CD14-positive monocyte (primary cell): ENCODE measurements at regions of chr12 and their contacts with region 1.

Region 1: GRCh38 chr12:57846577-57847319 is at the start of gene CTDSP2:
- DNase-seq: peak; percentile 94 to 96 (median 94)
- H3K4me3 ChIP-seq: peak within 1 kb of the TSS; percentile 85 to 99 (median 87)
- H3K4me3 Mint-ChIP-seq: peak within 1 kb of the TSS; percentile 86 to 93
- H3K27ac ChIP-seq: peak within 1 kb of the TSS; percentile 47 to 87
- H3K27ac Mint-ChIP-seq: peak within 1 kb of the TSS; percentile 63 to 91 (median 82)
- H3K4me1 ChIP-seq: peaks cover 45 to 62% of the 10 kb centered on the region in 2 donors
- H3K4me1 Mint-ChIP-seq: peaks cover 58% of the 10 kb centered on the region
- H3K27me3 ChIP-seq: peaks cover 9 to 11% of the 10 kb centered on the region in 2 donors
- H3K27me3 Mint-ChIP-seq: peaks cover 10 to 27% (median 16%) of the 10 kb centered on the region in 3 donors
- CTCF ChIP-seq: no peak
- polyA plus RNA-seq, gene CTDSP2: 59.1 to 148 (median 70.2) TPM

Region 2: DNA sequence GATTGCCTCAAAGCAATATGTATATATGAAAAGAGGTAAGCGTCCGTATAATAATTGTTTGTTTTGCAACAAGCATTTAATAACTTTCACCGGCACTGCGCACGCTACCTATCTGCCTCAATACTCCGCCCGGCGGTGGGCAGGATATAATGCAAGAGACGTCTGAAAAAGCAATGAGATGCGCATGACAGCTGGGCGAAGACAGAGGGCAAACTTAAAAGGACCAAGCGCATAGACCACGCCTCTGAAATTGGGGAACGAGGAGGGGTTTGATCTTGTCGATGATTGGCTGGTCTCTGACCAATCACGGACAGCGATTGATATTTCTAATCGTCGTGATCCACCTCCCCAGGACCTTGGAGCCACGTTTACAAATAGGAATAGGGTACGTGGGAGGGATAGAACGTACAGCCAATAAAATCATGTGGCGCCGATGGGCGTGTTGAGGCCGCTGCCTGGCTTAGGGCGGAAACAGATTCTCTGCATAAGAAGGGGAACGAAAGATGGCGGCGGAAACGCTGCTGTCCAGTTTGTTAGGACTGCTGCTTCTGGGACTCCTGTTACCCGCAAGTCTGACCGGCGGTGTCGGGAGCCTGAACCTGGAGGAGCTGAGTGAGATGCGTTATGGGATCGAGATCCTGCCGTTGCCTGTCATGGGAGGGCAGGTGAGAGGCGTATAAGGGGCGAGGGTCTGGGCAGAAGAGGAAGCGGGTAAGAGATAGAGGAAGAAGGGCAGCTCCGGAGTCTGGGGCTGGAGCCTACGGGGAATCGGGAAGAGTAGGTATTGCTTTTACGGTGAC is 152.9 kb before region 1 on chr12 and contains the start of gene OS9:
- intact Hi-C with region 1: loop called in 1 of 2 experiments (anchors 5 kb)
- DNase-seq: peak; percentile 99 to 100 (median 100)
- H3K4me3 ChIP-seq: peak within 1 kb of the TSS; percentile 63 to 86 (median 78)
- H3K4me3 Mint-ChIP-seq: no peak within 1 kb of the TSS
- H3K27ac ChIP-seq: peak within 1 kb of the TSS; percentile 66 to 92
- H3K27ac Mint-ChIP-seq: no peak within 1 kb of the TSS
- H3K4me1 ChIP-seq: peaks cover 13 to 18% of the 10 kb centered on the region in 2 donors
- H3K4me1 Mint-ChIP-seq: peaks cover 2% of the 10 kb centered on the region
- H3K27me3 ChIP-seq: no peaks in the 10 kb centered on the region
- H3K27me3 Mint-ChIP-seq: peaks cover 2 to 18% (median 7%) of the 10 kb centered on the region in 3 donors
- CTCF ChIP-seq: peak; percentile 84
- polyA plus RNA-seq, gene OS9: 90.9 to 484 (median 128) TPM

Region 3: GRCh38 chr12:57771708-57772428 is 74.9 kb before region 1 on chr12 and contains the start of gene METTL1:
- intact Hi-C with region 1: loop called in 1 of 2 experiments (anchors 5 kb)
- DNase-seq: peak; percentile 88 to 92 (median 91)
- H3K4me3 ChIP-seq: peak within 1 kb of the TSS; percentile 77 to 98 (median 82)
- H3K4me3 Mint-ChIP-seq: peak within 1 kb of the TSS; percentile 96 to 98
- H3K27ac ChIP-seq: peak within 1 kb of the TSS; percentile 72 to 93
- H3K27ac Mint-ChIP-seq: peak within 1 kb of the TSS; percentile 96 to 99 (median 98)
- H3K4me1 ChIP-seq: peaks cover 39 to 45% of the 10 kb centered on the region in 2 donors
- H3K4me1 Mint-ChIP-seq: peaks cover 40% of the 10 kb centered on the region
- H3K27me3 ChIP-seq: peaks cover 7 to 13% of the 10 kb centered on the region in 2 donors
- H3K27me3 Mint-ChIP-seq: peaks cover 12 to 15% (median 14%) of the 10 kb centered on the region in 3 donors
- CTCF ChIP-seq: no peak
- polyA plus RNA-seq, gene METTL1: 3.4 to 5.0 (median 3.7) TPM

Region 4: DNA sequence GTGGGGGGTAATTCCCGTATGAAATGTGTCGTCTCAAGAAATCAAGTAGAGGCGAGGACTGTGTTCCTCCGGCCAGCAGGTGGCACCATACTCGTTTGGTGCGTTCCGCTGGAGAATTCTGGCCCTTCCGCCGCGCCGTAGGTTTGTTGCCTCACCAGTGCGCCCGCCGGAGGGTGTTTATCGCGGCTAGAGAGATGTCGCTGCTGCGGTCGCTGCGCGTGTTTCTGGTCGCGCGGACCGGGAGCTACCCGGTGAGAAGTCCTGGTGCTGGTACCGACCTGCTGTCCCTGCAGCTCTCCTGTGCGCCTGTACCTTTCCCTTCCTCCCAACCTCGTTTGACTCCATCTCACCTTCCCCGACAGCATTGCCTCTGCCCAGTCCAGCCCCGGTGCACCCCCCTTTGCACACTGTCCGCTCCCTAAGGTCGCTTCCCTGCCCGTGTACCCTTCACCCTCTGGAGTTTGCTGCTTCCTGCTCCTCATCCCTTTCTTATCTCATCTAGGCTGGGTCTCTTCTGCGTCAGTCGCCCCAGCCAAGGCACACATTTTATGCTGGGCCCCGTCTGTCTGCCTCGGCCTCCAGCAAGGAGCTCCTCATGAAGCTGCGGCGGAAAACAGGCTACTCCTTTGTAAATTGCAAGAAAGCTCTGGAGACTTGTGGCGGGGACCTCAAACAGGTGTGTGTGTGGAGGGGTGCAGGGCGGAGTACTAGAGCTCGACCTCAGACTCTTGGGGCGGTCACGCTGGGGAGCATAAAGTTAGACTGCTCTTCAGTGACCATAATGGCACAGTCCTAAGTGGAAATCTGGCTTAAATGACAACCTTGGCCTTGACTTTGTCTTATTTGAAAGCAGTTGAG is 63.9 kb before region 1 on chr12 and contains the start of gene TSFM:
- intact Hi-C with region 1: loop called in 1 of 2 experiments (anchors 5 kb)
- DNase-seq: peak; percentile 91 to 93 (median 92)
- H3K4me3 ChIP-seq: peak within 1 kb of the TSS; percentile 63 to 87 (median 82)
- H3K4me3 Mint-ChIP-seq: peak within 1 kb of the TSS; percentile 99 to 100
- H3K27ac ChIP-seq: peak within 1 kb of the TSS; percentile 43 to 81
- H3K27ac Mint-ChIP-seq: peak within 1 kb of the TSS; percentile 91 to 98 (median 95)
- H3K4me1 ChIP-seq: peaks cover 37 to 39% of the 10 kb centered on the region in 2 donors
- H3K4me1 Mint-ChIP-seq: peaks cover 41% of the 10 kb centered on the region
- H3K27me3 ChIP-seq: no peaks in the 10 kb centered on the region
- H3K27me3 Mint-ChIP-seq: peaks cover 0 to 3% (median 0%) of the 10 kb centered on the region in 3 donors
- CTCF ChIP-seq: peak; percentile 94
- polyA plus RNA-seq, gene TSFM: 4.5 to 22.6 (median 21.8) TPM

Region 5: GRCh38 chr12:57941165-57941894 is 94.6 kb after region 1 on chr12 and contains the start of gene ATP23:
- intact Hi-C with region 1: loop called in 1 of 2 experiments (anchors 5 kb)
- DNase-seq: peak; percentile 83 to 88 (median 87)
- H3K4me3 ChIP-seq: peak within 1 kb of the TSS; percentile 72 to 88 (median 84)
- H3K4me3 Mint-ChIP-seq: peak within 1 kb of the TSS; percentile 93 to 96
- H3K27ac ChIP-seq: peak within 1 kb of the TSS; percentile 93 to 96
- H3K27ac Mint-ChIP-seq: peak within 1 kb of the TSS; percentile 98 to 99 (median 99)
- H3K4me1 ChIP-seq: peaks cover 44 to 60% of the 10 kb centered on the region in 2 donors
- H3K4me1 Mint-ChIP-seq: peaks cover 63% of the 10 kb centered on the region
- H3K27me3 ChIP-seq: no peaks in the 10 kb centered on the region
- H3K27me3 Mint-ChIP-seq: no peaks in the 10 kb centered on the region
- CTCF ChIP-seq: no peak
- polyA plus RNA-seq, gene ATP23: 12.4 to 27.5 (median 24.8) TPM